Testis (tissue), 5 donors: ENCODE measurements at regions of chr16 and their contacts with region 1.

Region 1: DNA sequence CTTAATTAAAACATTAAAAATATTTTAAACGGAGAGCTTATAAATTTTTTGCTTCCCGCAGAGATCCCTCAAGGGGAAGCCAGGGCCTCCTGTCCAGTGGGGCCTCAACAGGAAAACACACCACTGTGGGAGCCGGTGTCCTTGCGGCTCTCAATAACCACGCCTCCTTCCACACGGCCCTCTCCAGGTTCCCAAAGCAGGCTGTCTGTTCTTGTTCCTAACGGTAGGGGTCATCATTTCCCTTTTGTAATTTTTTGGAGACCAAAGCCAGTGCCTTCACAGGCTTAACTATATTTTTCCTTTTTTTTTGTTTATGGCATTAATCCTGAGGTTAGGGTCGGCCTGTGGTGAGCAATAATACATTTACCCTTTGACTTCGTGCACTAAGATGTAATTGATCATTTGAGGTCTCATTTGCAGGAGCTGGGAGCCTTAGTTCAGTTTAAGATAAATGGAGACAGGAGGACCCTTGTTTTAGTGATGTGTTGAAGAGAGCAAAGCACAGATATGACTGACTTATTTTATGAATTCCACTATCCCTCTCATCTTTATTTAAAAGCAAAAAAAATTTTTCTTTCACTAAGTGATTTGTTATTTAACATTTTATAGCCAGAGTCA is 77.5 kb upstream of the N4BP1 start:
- DNase-seq: peak; percentile 70
- H3K4me3 ChIP-seq: no peak overlapping the region
- H3K27ac ChIP-seq: no peak overlapping the region
- H3K4me1 ChIP-seq: no peaks in the 10 kb centered on the region
- H3K27me3 ChIP-seq: no peaks in the 10 kb centered on the region
- CTCF ChIP-seq: peak; percentile 22 to 65 (median 54)
- POLR2A ChIP-seq: no peak

Region 2: GRCh38 chr16:49350265-49351095 is 663.0 kb after region 1 on chr16:
- intact Hi-C with region 1: loop called (anchors 5 kb)
- DNase-seq: peak; percentile 81
- H3K4me3 ChIP-seq: no peak overlapping the region
- H3K27ac ChIP-seq: no peak overlapping the region
- H3K4me1 ChIP-seq: peaks cover 2% of the 10 kb centered on the region
- H3K27me3 ChIP-seq: no peaks in the 10 kb centered on the region
- CTCF ChIP-seq: peak; percentile 61 to 82 (median 76)
- POLR2A ChIP-seq: no peak

Region 3: DNA sequence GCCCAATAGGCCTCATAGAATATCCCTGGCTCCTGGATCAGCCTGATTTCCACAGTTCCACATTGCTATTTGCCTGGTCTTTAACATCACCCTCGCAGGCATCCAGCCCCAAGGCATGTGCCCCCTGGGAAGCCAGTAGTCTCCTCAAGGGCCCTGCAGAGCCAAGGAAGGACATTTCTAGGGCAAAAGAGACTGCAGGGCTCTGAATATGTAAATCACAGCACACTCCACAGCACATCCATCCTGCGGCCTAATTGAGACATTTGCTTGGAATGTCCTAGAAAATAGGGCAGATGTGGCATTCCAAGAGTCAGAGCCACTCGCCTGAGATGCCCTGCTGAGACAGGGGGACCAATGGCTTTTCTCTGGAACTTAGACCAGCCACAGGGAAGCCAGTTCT is 674.7 kb after region 1 on chr16:
- intact Hi-C with region 1: no loop called
- DNase-seq: no peak
- H3K4me3 ChIP-seq: no peak overlapping the region
- H3K27ac ChIP-seq: no peak overlapping the region
- H3K4me1 ChIP-seq: no peaks in the 10 kb centered on the region
- H3K27me3 ChIP-seq: no peaks in the 10 kb centered on the region
- CTCF ChIP-seq: no peak
- POLR2A ChIP-seq: no peak